Head of caudate nucleus (tissue), 42 donors: ENCODE measurements at regions of chr1 and their contacts with region 1.

Region 1: DNA sequence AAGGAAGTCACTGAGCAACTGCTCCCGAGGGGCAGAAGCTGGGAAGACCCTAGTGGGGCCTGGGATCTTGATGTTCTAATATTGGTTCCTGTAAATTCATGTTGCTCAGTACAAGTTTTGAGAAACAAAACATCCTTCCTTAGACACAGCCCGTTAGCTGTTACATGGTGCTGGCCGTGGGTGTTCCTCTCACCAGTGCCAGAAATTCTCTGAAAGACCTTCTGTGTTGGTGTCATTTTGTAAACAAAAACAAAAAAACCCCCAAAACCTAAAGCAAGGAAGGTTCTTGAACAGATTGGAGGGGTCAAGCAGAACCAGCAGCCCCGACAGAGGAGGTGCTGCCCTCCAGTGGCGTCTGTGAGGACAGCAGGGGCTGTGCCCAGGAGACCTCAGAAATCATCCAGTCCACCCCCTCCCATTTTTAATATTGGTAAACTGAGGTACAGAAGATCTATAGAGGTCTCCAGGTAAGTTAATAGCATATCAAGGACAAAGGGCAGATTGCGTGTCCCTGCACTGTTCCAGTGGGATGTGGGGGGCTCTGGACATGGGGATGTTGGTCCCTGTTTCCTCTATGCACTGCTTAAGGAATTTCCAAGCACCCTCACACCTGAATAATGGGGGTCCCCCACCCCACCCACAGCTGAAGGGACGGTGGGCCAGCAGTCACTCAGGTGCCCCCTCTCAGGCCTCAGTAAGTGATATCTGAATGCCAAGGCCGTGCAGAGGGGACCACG is 38.2 kb downstream of the SLC2A7 start:
- DNase-seq: peak; percentile 51 to 93 (median 82)

Region 2: DNA sequence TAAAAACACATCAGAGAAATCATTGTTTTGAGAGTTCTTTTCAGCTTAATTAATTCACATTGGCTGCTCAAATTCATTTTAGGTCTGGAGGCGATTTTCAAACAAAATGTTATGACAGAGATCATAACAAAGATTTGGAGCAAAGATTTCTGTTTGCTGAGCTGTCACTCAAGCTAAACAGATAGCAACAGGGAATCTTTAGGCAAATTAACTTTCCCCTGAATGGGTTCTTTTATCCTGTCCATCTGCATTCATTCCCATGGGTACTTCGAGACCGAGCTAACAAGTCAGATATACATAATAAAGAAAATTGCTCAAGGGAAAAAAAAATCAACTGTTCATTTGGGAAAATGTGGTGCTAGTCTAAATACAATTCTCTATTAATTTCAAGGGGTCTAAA is 72.6 kb before region 1 on chr1:
- intact Hi-C with region 1: loop called (anchors 5 kb)
- DNase-seq: no peak